ENCODE measurements at regions of chr1 and their contacts with region 1.

Region 1: GRCh38 chr1:43946236-43947060 is at the start of gene IPO13:
- DNase-seq: peak; percentile 98 to 99 (median 98)
- ATAC-seq: peak; percentile 96
- H3K4me3 ChIP-seq: peak within 1 kb of the TSS; percentile 60
- H3K27ac ChIP-seq: peak within 1 kb of the TSS; percentile 99
- H3K4me1 ChIP-seq: peaks cover 17 to 41% of the 10 kb centered on the region in 2 experiments
- H3K27me3 ChIP-seq: no peaks in the 10 kb centered on the region
- CTCF ChIP-seq: peak; percentile 91 to 96 (median 95)
- EP300 ChIP-seq: peak; percentile 18; the same call in 1 of the 2 replicates
- POLR2A ChIP-seq: peak; percentile 90
- RAD21 ChIP-seq: peak; percentile 67 to 76
- polyA plus RNA-seq, gene IPO13: 7.0 to 9.8 TPM

Region 2: GRCh38 chr1:43958351-43959255 is 12.2 kb after region 1 on chr1:
- CTCF ChIA-PET with region 1: no interaction called
- POLR2A ChIA-PET with region 1: interaction called, 11 read pairs
- in situ Hi-C with region 1: no loop called
- intact Hi-C with region 1: no loop called
- DNase-seq: peak; percentile 65 to 77 (median 70)
- ATAC-seq: peak; percentile 76
- H3K4me3 ChIP-seq: no peak overlapping the region
- H3K27ac ChIP-seq: no peak overlapping the region
- H3K4me1 ChIP-seq: peaks cover 15 to 16% of the 10 kb centered on the region in 2 experiments; a peak in 4 of 5 replicates
- H3K27me3 ChIP-seq: no peaks in the 10 kb centered on the region
- CTCF ChIP-seq: no peak
- EP300 ChIP-seq: peak; percentile 31; the same call in 1 of the 2 replicates
- POLR2A ChIP-seq: no peak
- RAD21 ChIP-seq: no peak

Region 3: DNA sequence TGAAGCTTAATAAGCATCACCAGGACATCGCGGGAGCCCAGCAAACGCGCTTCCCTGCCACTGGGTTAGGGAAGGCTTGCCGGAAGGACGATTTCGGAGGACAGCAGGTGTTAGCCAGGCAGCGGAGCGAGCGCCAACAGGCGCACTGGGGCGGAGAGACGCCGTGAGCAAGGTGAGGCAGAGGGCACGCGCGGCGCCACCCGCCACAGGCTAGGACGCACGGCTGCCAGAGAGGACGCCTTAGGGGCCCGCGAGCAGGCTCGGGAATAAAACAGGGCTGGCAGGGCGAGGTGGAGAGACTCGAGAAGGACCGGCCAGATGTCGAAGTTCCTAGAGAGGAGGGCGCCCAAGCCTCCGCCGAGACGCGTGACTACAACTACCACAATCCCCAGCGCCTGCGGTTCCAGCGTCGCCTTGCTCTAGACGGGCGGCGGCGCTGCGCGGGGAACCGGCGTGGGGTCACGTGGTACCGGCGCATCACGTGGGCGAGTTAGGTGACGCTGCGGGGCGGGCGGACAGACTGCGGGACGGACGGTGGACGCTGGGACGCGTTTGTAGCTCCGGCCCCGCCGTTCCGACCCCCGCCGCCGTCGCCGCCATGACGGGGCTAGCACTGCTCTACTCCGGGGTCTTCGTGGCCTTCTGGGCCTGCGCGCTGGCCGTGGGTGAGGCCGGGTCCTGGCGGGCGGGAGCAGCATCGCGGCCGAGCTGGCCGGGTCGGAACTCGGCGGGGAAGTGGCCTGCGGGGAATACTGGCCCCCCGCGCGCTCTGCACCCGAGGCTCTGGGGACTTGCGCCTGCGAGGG is 28.2 kb after region 1 on chr1 and contains the start of gene ATP6V0B:
- CTCF ChIA-PET with region 1: no interaction called
- POLR2A ChIA-PET with region 1: interaction called, 4 read pairs
- in situ Hi-C with region 1: no loop called
- intact Hi-C with region 1: loop called (anchors 1 kb)
- DNase-seq: peak; percentile 91 to 99 (median 95)
- ATAC-seq: peak; percentile 87
- H3K4me3 ChIP-seq: peak within 1 kb of the TSS; percentile 87
- H3K27ac ChIP-seq: peak within 1 kb of the TSS; percentile 89
- H3K4me1 ChIP-seq: peaks cover 41 to 67% of the 10 kb centered on the region in 2 experiments
- H3K27me3 ChIP-seq: no peaks in the 10 kb centered on the region
- CTCF ChIP-seq: peak in 1 of 3 experiments; percentile 33; a peak in 2 of 6 replicates
- EP300 ChIP-seq: no peak; the same call in 1 of the 2 replicates
- POLR2A ChIP-seq: peak; percentile 81
- RAD21 ChIP-seq: 0 out of 4 replicates have a peak, but pooled peaks of 1 of the 2 experiments have one; percentile 13
- polyA plus RNA-seq, gene ATP6V0B: 137 to 276 TPM